ENCODE measurements at regions of chr6 and their contacts with region 1.

Region 1: GRCh38 chr6:170529839-170530469 is 23.2 kb downstream of the PSMB1 start:
- DNase-seq: peak; percentile 69
- ATAC-seq: peak; percentile 91
- H3K4me3 ChIP-seq: no peak overlapping the region
- H3K27ac ChIP-seq: no peak overlapping the region
- H3K4me1 ChIP-seq: peaks cover 5% of the 10 kb centered on the region
- H3K27me3 ChIP-seq: no peaks in the 10 kb centered on the region; a peak in 1 of 5 replicates
- CTCF ChIP-seq: peak; percentile 89
- EP300 ChIP-seq: no peak
- POLR2A ChIP-seq: no peak
- RAD21 ChIP-seq: peak; percentile 87

Region 2: DNA sequence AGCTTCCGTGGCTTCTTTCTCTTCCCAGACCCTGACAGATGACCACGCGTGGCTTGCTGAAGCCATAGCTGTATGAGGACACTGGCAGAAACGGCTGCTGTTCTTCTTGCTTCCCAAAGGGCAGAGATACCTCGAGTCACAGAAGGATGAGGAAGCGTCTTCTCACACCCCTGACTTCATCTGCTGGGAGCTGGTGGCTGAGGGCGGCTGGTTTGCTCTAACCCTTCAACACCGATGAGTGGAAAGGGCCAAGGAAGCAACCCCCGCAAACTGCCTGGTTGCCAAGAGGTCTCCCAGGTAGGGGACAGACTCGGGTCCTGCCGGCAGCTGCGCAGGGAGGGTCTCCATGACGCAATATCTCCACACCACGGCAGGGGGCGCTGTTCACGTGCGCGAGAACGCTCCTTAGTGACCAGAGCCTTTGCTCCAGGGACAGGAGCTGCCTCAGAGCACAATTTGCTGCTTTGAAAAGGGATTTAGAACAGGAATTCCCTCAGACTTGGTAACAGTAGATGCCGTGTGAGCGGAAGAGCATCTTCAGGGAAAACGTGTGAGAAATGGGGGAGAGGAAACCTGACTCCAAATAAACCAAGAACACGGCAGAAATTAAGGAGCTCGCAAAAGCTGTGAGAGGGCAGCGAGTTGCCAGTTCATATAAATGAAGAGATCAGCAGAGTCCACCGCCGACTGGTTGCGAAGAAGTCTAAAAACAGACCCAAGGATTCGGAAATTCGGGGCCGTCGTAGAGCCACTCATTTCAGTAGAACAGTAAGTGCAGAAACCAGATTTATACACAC is 698.3 kb before region 1 on chr6:
- CTCF ChIA-PET with region 1: interaction called, 10 read pairs
- POLR2A ChIA-PET with region 1: no interaction called
- in situ Hi-C with region 1: loop called (anchors 5 kb)
- intact Hi-C with region 1: loop called (anchors 1 kb)
- DNase-seq: peak; percentile 60
- ATAC-seq: peak; percentile 95
- H3K4me3 ChIP-seq: peak overlapping the region in 1 of 3 experiments; percentile 38; a peak in 2 of 6 replicates
- H3K27ac ChIP-seq: no peak overlapping the region
- H3K4me1 ChIP-seq: peaks cover 19% of the 10 kb centered on the region
- H3K27me3 ChIP-seq: peaks cover 0 to 24% of the 10 kb centered on the region in 2 experiments; a peak in 4 of 5 replicates
- CTCF ChIP-seq: peak; percentile 100
- EP300 ChIP-seq: no peak
- POLR2A ChIP-seq: no peak
- RAD21 ChIP-seq: peak; percentile 94

Region 3: GRCh38 chr6:170443151-170443662 is 86.7 kb before region 1 on chr6:
- CTCF ChIA-PET with region 1: no interaction called
- POLR2A ChIA-PET with region 1: no interaction called
- in situ Hi-C with region 1: no loop called
- intact Hi-C with region 1: no loop called
- DNase-seq: no peak
- ATAC-seq: peak; percentile 75
- H3K4me3 ChIP-seq: no peak overlapping the region
- H3K27ac ChIP-seq: no peak overlapping the region
- H3K4me1 ChIP-seq: peaks cover 2% of the 10 kb centered on the region
- H3K27me3 ChIP-seq: peaks cover 11 to 73% of the 10 kb centered on the region in 2 experiments
- CTCF ChIP-seq: peak; percentile 52
- EP300 ChIP-seq: no peak
- POLR2A ChIP-seq: no peak
- RAD21 ChIP-seq: no peak

Region 4: GRCh38 chr6:170561561-170562220 is 31.7 kb after region 1 on chr6:
- CTCF ChIA-PET with region 1: no interaction called
- POLR2A ChIA-PET with region 1: no interaction called
- in situ Hi-C with region 1: no loop called
- intact Hi-C with region 1: loop called (anchors 1 kb)
- DNase-seq: no peak
- ATAC-seq: no peak
- H3K4me3 ChIP-seq: no peak overlapping the region
- H3K27ac ChIP-seq: no peak overlapping the region
- H3K4me1 ChIP-seq: peaks cover 7% of the 10 kb centered on the region
- H3K27me3 ChIP-seq: no peaks in the 10 kb centered on the region
- CTCF ChIP-seq: no peak
- EP300 ChIP-seq: no peak
- POLR2A ChIP-seq: no peak
- RAD21 ChIP-seq: no peak